Ascending aorta (tissue), 2 donors: ENCODE measurements at regions of chr1 and their contacts with region 1.

Region 1: DNA sequence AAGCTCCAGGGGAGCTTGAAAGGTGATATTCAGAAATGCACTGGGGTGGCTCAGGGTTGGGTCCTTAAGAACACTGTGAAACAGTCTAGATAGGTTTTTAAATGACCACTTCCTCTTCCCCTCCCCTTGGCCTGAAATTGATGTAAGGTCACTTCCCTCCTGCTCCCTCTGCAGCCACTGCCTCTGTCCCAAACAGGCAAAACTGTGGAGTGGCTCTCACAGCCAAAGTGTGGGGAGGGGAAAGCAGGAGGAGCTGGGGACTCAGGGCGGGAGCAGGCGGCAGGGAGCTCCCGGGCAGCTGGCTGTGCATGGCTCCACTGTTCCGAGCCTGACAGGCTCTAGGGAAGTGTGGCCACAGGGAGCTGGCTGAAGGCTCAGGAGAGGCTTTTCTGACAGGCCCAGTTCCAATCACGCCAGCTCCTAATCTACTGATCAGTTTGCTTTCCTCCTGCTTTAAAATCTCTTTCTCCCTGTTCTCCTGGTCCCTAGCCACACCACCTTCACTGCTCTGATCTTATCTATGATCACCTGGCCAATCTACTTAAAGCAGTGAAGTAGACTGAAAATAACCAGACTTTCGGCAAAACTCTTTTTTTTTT is 5.1 kb upstream of the CSRP1 start:
- DNase-seq: peak in 1 of 2 donors; percentile 85
- H3K4me3 ChIP-seq: peak overlapping the region in 1 of 2 donors; percentile 3
- H3K27ac ChIP-seq: peak overlapping the region; percentile 62 to 87
- H3K4me1 ChIP-seq: peaks cover 9 to 27% of the 10 kb centered on the region in 2 donors
- H3K27me3 ChIP-seq: no peaks in the 10 kb centered on the region
- CTCF ChIP-seq: no peak

Region 2: GRCh38 chr1:201254625-201255506 is 257.2 kb before region 1 on chr1:
- intact Hi-C with region 1: loop called (anchors 10 kb)
- DNase-seq: no peak
- H3K4me3 ChIP-seq: no peak overlapping the region
- H3K27ac ChIP-seq: no peak overlapping the region
- H3K4me1 ChIP-seq: no peaks in the 10 kb centered on the region
- H3K27me3 ChIP-seq: peaks cover 3% of the 10 kb centered on the region
- CTCF ChIP-seq: peak; percentile 80 to 94 (median 86)

Region 3: DNA sequence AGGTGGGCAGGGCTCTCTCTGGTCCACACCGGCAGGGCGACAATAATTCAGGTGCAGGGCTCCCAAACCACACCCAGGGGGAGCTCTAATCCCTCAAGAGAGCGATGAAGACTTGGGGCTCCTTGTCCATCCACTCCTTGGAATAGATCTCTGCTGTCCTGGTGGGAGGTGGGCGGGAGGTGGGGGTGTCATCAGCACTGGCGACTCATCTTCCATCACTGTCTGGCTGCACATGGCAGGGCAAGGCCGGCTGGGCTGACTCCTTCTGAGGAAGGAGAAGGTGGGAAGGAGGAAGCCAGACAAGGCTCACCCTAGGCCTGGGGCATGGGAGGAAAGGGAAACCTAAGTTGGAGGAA is 163.9 kb before region 1 on chr1:
- intact Hi-C with region 1: loop called (anchors 5 kb)
- DNase-seq: no peak
- H3K4me3 ChIP-seq: no peak overlapping the region
- H3K27ac ChIP-seq: no peak overlapping the region
- H3K4me1 ChIP-seq: no peaks in the 10 kb centered on the region
- H3K27me3 ChIP-seq: no peaks in the 10 kb centered on the region
- CTCF ChIP-seq: peak in 1 of 3 experiments; percentile 40

Region 4: GRCh38 chr1:201408176-201408833 is 103.7 kb before region 1 on chr1:
- intact Hi-C with region 1: no loop called
- DNase-seq: peak in 1 of 2 donors; percentile 73
- H3K4me3 ChIP-seq: no peak overlapping the region
- H3K27ac ChIP-seq: no peak overlapping the region
- H3K4me1 ChIP-seq: no peaks in the 10 kb centered on the region
- H3K27me3 ChIP-seq: no peaks in the 10 kb centered on the region
- CTCF ChIP-seq: peak; percentile 56 to 79 (median 79)

Region 5: GRCh38 chr1:201447911-201448871 is 63.8 kb before region 1 on chr1:
- intact Hi-C with region 1: loop called (anchors 1 kb)
- DNase-seq: peak in 1 of 2 donors; percentile 86
- H3K4me3 ChIP-seq: no peak overlapping the region
- H3K27ac ChIP-seq: peak overlapping the region in 1 of 2 donors; percentile 28
- H3K4me1 ChIP-seq: peaks cover 6 to 10% of the 10 kb centered on the region in 2 donors
- H3K27me3 ChIP-seq: no peaks in the 10 kb centered on the region
- CTCF ChIP-seq: peak; percentile 78 to 89 (median 81)